Calu3 (cell line): ENCODE measurements at regions of chr19 and their contacts with region 1.

Region 1: GRCh38 chr19:39124136-39124764 is 1.3 kb upstream of the PAK4 start:
- DNase-seq: no peak
- H3K4me3 Mint-ChIP-seq: peak overlapping the region; percentile 15
- H3K27ac Mint-ChIP-seq: peak overlapping the region; percentile 45
- H3K4me1 Mint-ChIP-seq: peaks cover 50% of the 10 kb centered on the region
- H3K27me3 Mint-ChIP-seq: no peaks in the 10 kb centered on the region
- CTCF ChIP-seq: no peak

Region 2: GRCh38 chr19:39110263-39110967 is 13.8 kb before region 1 on chr19:
- CTCF ChIA-PET with region 1: interaction called, 12 read pairs
- intact Hi-C with region 1: no loop called
- DNase-seq: peak; percentile 91
- H3K4me3 Mint-ChIP-seq: no peak overlapping the region
- H3K27ac Mint-ChIP-seq: peak overlapping the region; percentile 46
- H3K4me1 Mint-ChIP-seq: peaks cover 33% of the 10 kb centered on the region
- H3K27me3 Mint-ChIP-seq: no peaks in the 10 kb centered on the region
- CTCF ChIP-seq: peak; percentile 95

Region 3: GRCh38 chr19:39166571-39167391 is 42.5 kb after region 1 on chr19:
- CTCF ChIA-PET with region 1: interaction called, 11 read pairs
- intact Hi-C with region 1: no loop called
- DNase-seq: peak; percentile 95
- H3K4me3 Mint-ChIP-seq: peak overlapping the region; percentile 68
- H3K27ac Mint-ChIP-seq: peak overlapping the region; percentile 86
- H3K4me1 Mint-ChIP-seq: peaks cover 45% of the 10 kb centered on the region
- H3K27me3 Mint-ChIP-seq: no peaks in the 10 kb centered on the region
- CTCF ChIP-seq: no peak

Region 4: GRCh38 chr19:39187559-39187957 is 63.3 kb after region 1 on chr19:
- CTCF ChIA-PET with region 1: interaction called, 3 read pairs
- intact Hi-C with region 1: loop called (anchors 1 kb)
- DNase-seq: no peak
- H3K4me3 Mint-ChIP-seq: no peak overlapping the region
- H3K27ac Mint-ChIP-seq: peak overlapping the region; percentile 6
- H3K4me1 Mint-ChIP-seq: no peaks in the 10 kb centered on the region
- H3K27me3 Mint-ChIP-seq: no peaks in the 10 kb centered on the region
- CTCF ChIP-seq: no peak

Region 5: DNA sequence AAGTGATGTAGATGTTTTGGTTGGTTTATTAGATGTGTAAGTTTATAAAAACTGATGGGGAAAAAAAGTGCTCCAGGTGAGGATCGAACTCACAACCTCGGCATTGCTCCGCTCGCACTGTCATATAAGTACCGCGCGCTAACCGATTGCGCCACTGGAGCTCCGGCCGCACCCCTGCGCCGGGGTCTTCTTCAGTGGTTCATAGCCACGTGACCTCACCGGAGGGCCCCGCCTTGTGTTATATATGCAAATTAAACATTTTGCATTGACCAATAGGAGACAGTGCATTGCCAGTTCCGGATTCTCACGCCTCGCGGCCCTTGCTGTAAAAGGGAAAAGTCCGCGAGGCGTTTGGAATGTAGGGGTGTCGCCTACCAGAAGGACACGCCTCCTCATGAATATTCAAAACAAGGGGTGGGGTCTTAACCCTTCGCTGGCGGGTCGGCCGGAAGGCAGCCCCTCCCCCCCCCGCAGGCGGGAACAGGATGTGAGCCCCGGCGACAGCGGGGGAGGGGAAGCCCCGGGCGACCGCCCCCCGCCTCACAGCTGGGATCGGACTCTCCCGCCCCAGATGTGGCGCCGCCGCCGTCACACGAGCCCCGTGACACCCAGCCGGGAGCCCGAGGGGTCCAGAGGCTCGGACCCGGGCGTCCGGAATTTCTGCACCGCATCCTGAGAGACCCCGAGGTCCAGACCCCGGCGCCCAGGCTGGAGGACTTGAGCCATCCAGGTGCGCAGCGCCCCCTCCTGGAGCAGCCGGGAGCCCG is 288.0 kb after region 1 on chr19 and contains the start of gene PLEKHG2:
- CTCF ChIA-PET with region 1: no interaction called
- intact Hi-C with region 1: loop called (anchors 5 kb)
- DNase-seq: peak; percentile 99
- H3K4me3 Mint-ChIP-seq: peak within 1 kb of the TSS; percentile 77
- H3K27ac Mint-ChIP-seq: peak within 1 kb of the TSS; percentile 94
- H3K4me1 Mint-ChIP-seq: peaks cover 45% of the 10 kb centered on the region
- H3K27me3 Mint-ChIP-seq: no peaks in the 10 kb centered on the region
- CTCF ChIP-seq: peak; percentile 93
- total RNA-seq, gene PLEKHG2: 64.1 and 65.3 TPM in 2 replicates